ENCODE measurements at regions of chr20 and their contacts with region 1.

Region 1: DNA sequence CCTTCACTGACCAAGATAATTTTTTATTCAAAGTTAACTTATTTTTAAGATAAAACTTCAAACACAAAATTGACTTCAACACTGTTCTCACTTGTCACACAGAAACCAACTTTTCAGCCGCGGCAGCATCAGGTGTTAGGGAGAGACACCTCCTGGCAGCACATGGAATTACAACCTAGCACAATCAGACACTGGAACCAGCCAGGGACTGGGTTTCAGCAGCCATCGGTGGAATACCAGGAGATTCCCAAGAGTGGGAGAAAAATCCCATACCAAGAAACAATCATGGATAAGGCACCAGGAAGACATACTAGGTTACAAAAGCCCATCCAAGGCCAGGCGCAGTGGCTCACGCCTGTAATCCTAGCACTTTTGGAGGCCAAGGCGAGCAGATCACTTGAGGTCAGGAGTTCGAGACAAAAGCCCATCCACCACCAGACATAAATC is 70.0 kb downstream of the SNX5 start:
- DNase-seq: peak; percentile 71 to 81
- H3K4me3 ChIP-seq: no peak overlapping the region
- H3K4me3 Mint-ChIP-seq: no peak overlapping the region
- H3K27ac Mint-ChIP-seq: peak overlapping the region; percentile 29
- H3K4me1 ChIP-seq: peaks cover 4% of the 10 kb centered on the region; the same call in 1 of the 2 replicates
- H3K4me1 Mint-ChIP-seq: peaks cover 4% of the 10 kb centered on the region
- H3K27me3 ChIP-seq: no peaks in the 10 kb centered on the region
- H3K27me3 Mint-ChIP-seq: no peaks in the 10 kb centered on the region
- CTCF ChIP-seq: peak; percentile 85 to 97

Region 2: GRCh38 chr20:17611540-17612286 is 286.9 kb before region 1 on chr20:
- CTCF ChIA-PET with region 1: no interaction called
- POLR2A ChIA-PET with region 1: no interaction called
- intact Hi-C with region 1: loop called (anchors 2 kb)
- DNase-seq: peak; percentile 81
- H3K4me3 ChIP-seq: no peak overlapping the region
- H3K4me3 Mint-ChIP-seq: peak overlapping the region; percentile 20
- H3K27ac Mint-ChIP-seq: peak overlapping the region; percentile 63
- H3K4me1 ChIP-seq: no peaks in the 10 kb centered on the region
- H3K4me1 Mint-ChIP-seq: peaks cover 5% of the 10 kb centered on the region
- H3K27me3 ChIP-seq: no peaks in the 10 kb centered on the region
- H3K27me3 Mint-ChIP-seq: no peaks in the 10 kb centered on the region
- CTCF ChIP-seq: peak in 1 of 2 experiments; percentile 71

Region 3: GRCh38 chr20:17654649-17655285 is 243.8 kb before region 1 on chr20:
- CTCF ChIA-PET with region 1: no interaction called
- POLR2A ChIA-PET with region 1: no interaction called
- intact Hi-C with region 1: loop called (anchors 1 kb)
- DNase-seq: peak in 1 of 2 experiments; percentile 62
- H3K4me3 ChIP-seq: no peak overlapping the region
- H3K4me3 Mint-ChIP-seq: no peak overlapping the region
- H3K27ac Mint-ChIP-seq: peak overlapping the region; percentile 24
- H3K4me1 ChIP-seq: 0 out of 2 replicates have a peak, but pooled peaks cover 8% of the 10 kb centered on the region
- H3K4me1 Mint-ChIP-seq: peaks cover 26% of the 10 kb centered on the region
- H3K27me3 ChIP-seq: no peaks in the 10 kb centered on the region
- H3K27me3 Mint-ChIP-seq: no peaks in the 10 kb centered on the region
- CTCF ChIP-seq: peak; percentile 60 to 62

Region 4: GRCh38 chr20:17710379-17711266 is 187.9 kb before region 1 on chr20:
- CTCF ChIA-PET with region 1: no interaction called
- POLR2A ChIA-PET with region 1: no interaction called
- intact Hi-C with region 1: loop called (anchors 2 kb)
- DNase-seq: peak; percentile 76 to 83
- H3K4me3 ChIP-seq: peak overlapping the region; percentile 46
- H3K4me3 Mint-ChIP-seq: peak overlapping the region; percentile 68
- H3K27ac Mint-ChIP-seq: peak overlapping the region; percentile 82
- H3K4me1 ChIP-seq: peaks cover 78% of the 10 kb centered on the region
- H3K4me1 Mint-ChIP-seq: peaks cover 54% of the 10 kb centered on the region
- H3K27me3 ChIP-seq: no peaks in the 10 kb centered on the region
- H3K27me3 Mint-ChIP-seq: no peaks in the 10 kb centered on the region
- CTCF ChIP-seq: no peak

Region 5: DNA sequence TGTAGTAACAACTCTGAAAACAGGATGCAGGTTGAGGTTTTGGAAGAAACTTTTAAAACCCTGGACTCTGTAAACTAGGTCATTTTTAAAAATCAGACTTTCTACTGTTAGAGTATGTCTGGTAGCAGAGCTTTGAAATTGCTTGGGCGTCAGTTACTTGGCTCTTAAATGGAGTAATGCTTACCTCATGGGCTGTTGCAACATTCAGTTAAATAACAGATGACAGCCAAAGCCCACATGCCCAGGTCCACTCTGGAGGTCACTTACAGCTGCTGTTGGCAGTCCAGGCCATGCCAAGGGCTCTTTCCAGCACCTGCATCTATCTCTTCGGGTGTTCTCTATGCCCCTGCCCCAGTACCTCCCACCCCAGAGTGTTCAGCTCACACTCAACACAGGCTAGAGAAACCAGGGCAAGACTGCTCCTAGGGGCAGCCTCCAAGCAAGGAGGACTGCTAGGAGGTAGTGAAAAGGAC is 102.4 kb before region 1 on chr20:
- CTCF ChIA-PET with region 1: no interaction called
- POLR2A ChIA-PET with region 1: no interaction called
- intact Hi-C with region 1: no loop called
- DNase-seq: no peak
- H3K4me3 ChIP-seq: no peak overlapping the region
- H3K4me3 Mint-ChIP-seq: no peak overlapping the region
- H3K27ac Mint-ChIP-seq: no peak overlapping the region
- H3K4me1 ChIP-seq: peaks cover 12% of the 10 kb centered on the region
- H3K4me1 Mint-ChIP-seq: peaks cover 17% of the 10 kb centered on the region
- H3K27me3 ChIP-seq: no peaks in the 10 kb centered on the region
- H3K27me3 Mint-ChIP-seq: no peaks in the 10 kb centered on the region
- CTCF ChIP-seq: no peak

Region 6: GRCh38 chr20:17910828-17911294 is 12.3 kb after region 1 on chr20:
- CTCF ChIA-PET with region 1: no interaction called
- POLR2A ChIA-PET with region 1: no interaction called
- intact Hi-C with region 1: no loop called
- DNase-seq: no peak
- H3K4me3 ChIP-seq: no peak overlapping the region
- H3K4me3 Mint-ChIP-seq: no peak overlapping the region
- H3K27ac Mint-ChIP-seq: no peak overlapping the region
- H3K4me1 ChIP-seq: no peaks in the 10 kb centered on the region
- H3K4me1 Mint-ChIP-seq: peaks cover 7% of the 10 kb centered on the region
- H3K27me3 ChIP-seq: no peaks in the 10 kb centered on the region; the same call in 1 of the 2 replicates
- H3K27me3 Mint-ChIP-seq: no peaks in the 10 kb centered on the region
- CTCF ChIP-seq: no peak

Region 7: DNA sequence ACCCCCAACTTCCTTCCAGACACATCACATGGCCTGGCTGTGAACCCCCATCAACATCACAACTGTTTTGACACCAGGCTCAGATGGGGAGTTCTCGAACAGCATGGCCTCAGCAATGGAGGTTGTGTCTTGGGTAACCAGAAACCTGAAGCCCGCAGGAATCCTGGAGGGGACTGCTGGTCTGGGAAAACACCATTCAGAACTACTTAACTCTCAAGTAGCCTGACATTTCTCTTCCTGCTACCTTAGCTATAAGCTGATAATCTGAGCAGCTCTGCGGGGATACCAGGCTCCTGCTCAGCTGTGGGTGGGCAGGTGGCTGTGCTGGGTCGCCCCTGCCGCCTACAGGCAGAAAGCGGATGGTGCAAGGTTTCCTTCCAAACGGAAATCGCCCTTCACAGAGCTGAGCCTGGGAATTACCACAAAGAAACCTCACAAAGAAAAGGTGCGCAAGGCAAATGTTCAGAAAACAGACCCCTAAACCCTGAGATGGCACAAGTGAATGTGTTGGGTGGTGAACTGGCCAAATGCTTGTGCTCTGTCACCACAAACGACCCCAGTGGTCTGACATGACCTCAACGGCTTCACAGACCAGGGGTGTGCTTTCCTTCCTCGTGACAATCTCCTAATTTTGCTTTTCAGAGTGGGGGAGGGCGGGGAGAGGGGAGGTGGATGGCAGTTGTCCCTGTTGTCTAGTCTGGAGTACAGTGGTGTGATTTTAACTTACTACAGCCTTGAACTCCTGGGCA is 40.5 kb after region 1 on chr20:
- CTCF ChIA-PET with region 1: no interaction called
- POLR2A ChIA-PET with region 1: no interaction called
- intact Hi-C with region 1: loop called (anchors 5 kb)
- DNase-seq: peak; percentile 75 to 83
- H3K4me3 ChIP-seq: no peak overlapping the region
- H3K4me3 Mint-ChIP-seq: no peak overlapping the region
- H3K27ac Mint-ChIP-seq: peak overlapping the region; percentile 66
- H3K4me1 ChIP-seq: no peaks in the 10 kb centered on the region
- H3K4me1 Mint-ChIP-seq: no peaks in the 10 kb centered on the region
- H3K27me3 ChIP-seq: no peaks in the 10 kb centered on the region
- H3K27me3 Mint-ChIP-seq: no peaks in the 10 kb centered on the region
- CTCF ChIP-seq: peak; percentile 94 to 96